Caco-2 (cell line): ENCODE measurements at regions of chr2 and their contacts with region 1.

Region 1: GRCh38 chr2:186256540-186256939 is 229.5 kb upstream of the ZC3H15 start:
- DNase-seq: peak in 1 of 2 experiments; percentile 33
- H3K4me3 ChIP-seq: no peak overlapping the region
- H3K4me3 Mint-ChIP-seq: no peak overlapping the region
- H3K27ac Mint-ChIP-seq: no peak overlapping the region
- H3K4me1 ChIP-seq: no peaks in the 10 kb centered on the region
- H3K4me1 Mint-ChIP-seq: no peaks in the 10 kb centered on the region
- H3K27me3 ChIP-seq: no peaks in the 10 kb centered on the region
- H3K27me3 Mint-ChIP-seq: no peaks in the 10 kb centered on the region
- CTCF ChIP-seq: peak; percentile 50 to 54

Region 2: DNA sequence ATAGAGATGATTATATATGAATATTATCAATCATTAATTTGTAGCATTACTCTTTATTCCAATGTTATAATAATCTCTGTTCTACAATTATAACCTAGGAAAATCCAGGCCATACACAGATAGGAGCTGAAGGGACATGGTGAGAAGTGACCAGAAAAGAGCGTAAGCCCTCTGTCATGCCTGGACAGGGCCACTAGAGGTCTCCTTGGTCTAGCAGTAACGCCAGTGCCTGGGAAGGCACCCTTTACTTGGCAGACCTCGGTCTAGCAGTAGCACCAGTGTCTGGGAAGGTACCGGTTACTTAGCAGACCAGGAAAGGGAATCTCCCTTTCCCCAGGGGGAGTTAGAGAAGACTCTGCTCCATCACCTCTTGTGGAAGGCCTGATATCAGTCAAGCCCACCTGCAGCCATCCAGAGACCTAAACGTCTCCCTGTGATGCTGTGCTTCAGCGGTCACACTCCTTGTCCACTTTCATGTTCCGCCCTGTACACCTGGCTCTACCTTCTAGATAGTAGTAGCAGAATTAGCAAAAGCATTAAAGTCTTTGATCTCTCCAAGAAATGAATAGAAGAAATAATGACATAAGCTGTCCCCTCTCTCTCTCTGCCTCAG is 965.4 kb before region 1 on chr2:
- CTCF ChIA-PET with region 1: no interaction called
- POLR2A ChIA-PET with region 1: no interaction called
- intact Hi-C with region 1: loop called (anchors 1 kb)
- DNase-seq: peak; percentile 72 to 79
- H3K4me3 ChIP-seq: no peak overlapping the region
- H3K4me3 Mint-ChIP-seq: no peak overlapping the region
- H3K27ac Mint-ChIP-seq: no peak overlapping the region
- H3K4me1 ChIP-seq: no peaks in the 10 kb centered on the region; the same call in 1 of the 2 replicates
- H3K4me1 Mint-ChIP-seq: peaks cover 5% of the 10 kb centered on the region
- H3K27me3 ChIP-seq: no peaks in the 10 kb centered on the region
- H3K27me3 Mint-ChIP-seq: no peaks in the 10 kb centered on the region
- CTCF ChIP-seq: peak; percentile 71 to 83

Region 3: DNA sequence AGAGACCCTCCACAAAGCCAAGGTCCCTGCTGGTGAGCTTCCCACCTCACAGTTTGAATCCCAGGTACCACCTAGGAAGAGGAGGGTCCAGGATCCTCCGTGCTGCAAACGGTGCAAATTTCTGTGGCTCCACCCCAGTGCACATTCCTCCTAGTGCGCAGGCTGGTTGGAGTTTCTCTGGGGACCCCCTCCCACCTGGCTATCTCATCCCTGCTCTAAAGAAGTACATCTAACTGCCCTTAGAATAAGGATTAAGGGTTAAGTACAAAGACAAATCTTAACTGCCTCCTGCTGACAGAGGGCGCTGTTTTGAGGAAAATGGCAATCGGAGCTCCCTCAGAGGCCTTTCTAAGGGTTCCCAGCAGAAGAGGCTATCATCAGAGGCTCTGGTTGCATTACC is 627.6 kb before region 1 on chr2:
- CTCF ChIA-PET with region 1: no interaction called
- POLR2A ChIA-PET with region 1: no interaction called
- intact Hi-C with region 1: loop called (anchors 1 kb)
- DNase-seq: peak; percentile 32 to 45
- H3K4me3 ChIP-seq: no peak overlapping the region
- H3K4me3 Mint-ChIP-seq: no peak overlapping the region
- H3K27ac Mint-ChIP-seq: no peak overlapping the region
- H3K4me1 ChIP-seq: no peaks in the 10 kb centered on the region
- H3K4me1 Mint-ChIP-seq: no peaks in the 10 kb centered on the region
- H3K27me3 ChIP-seq: no peaks in the 10 kb centered on the region; the same call in 1 of the 2 replicates
- H3K27me3 Mint-ChIP-seq: no peaks in the 10 kb centered on the region
- CTCF ChIP-seq: peak in 1 of 2 experiments; percentile 24

Region 4: GRCh38 chr2:185875136-185875931 is 381.2 kb before region 1 on chr2:
- CTCF ChIA-PET with region 1: no interaction called
- POLR2A ChIA-PET with region 1: no interaction called
- intact Hi-C with region 1: loop called (anchors 10 kb)
- DNase-seq: no peak
- H3K4me3 ChIP-seq: no peak overlapping the region
- H3K4me3 Mint-ChIP-seq: no peak overlapping the region
- H3K27ac Mint-ChIP-seq: no peak overlapping the region
- H3K4me1 ChIP-seq: no peaks in the 10 kb centered on the region
- H3K4me1 Mint-ChIP-seq: no peaks in the 10 kb centered on the region
- H3K27me3 ChIP-seq: no peaks in the 10 kb centered on the region
- H3K27me3 Mint-ChIP-seq: no peaks in the 10 kb centered on the region
- CTCF ChIP-seq: no peak

Region 5: GRCh38 chr2:185979546-185980071 is 276.9 kb before region 1 on chr2:
- CTCF ChIA-PET with region 1: no interaction called
- POLR2A ChIA-PET with region 1: no interaction called
- intact Hi-C with region 1: loop called (anchors 1 kb)
- DNase-seq: peak in 1 of 2 experiments; percentile 45
- H3K4me3 ChIP-seq: no peak overlapping the region
- H3K4me3 Mint-ChIP-seq: no peak overlapping the region
- H3K27ac Mint-ChIP-seq: no peak overlapping the region
- H3K4me1 ChIP-seq: 0 out of 2 replicates have a peak, but pooled peaks cover 4% of the 10 kb centered on the region
- H3K4me1 Mint-ChIP-seq: peaks cover 7% of the 10 kb centered on the region
- H3K27me3 ChIP-seq: no peaks in the 10 kb centered on the region
- H3K27me3 Mint-ChIP-seq: no peaks in the 10 kb centered on the region
- CTCF ChIP-seq: no peak

Region 6: DNA sequence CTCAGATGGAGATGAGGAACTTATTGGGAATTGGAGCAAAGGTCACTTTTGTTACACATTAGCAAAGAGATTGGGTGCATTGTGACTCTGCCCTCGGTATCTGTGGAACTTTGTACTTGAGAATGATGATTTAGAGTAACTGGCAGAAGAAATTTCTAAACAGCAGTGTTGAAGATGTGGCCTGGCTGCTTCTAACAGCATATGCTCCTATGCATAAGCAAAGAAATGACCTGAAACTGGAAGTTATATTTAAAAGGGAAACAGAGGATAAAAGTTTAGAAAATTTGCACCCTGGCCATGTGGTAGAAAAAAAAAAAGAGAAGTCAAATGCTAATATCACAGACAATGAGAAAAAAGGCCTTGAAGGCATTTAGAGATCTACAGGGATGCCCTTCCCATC is 27.3 kb before region 1 on chr2:
- CTCF ChIA-PET with region 1: no interaction called
- POLR2A ChIA-PET with region 1: no interaction called
- intact Hi-C with region 1: no loop called
- DNase-seq: no peak
- H3K4me3 ChIP-seq: no peak overlapping the region
- H3K4me3 Mint-ChIP-seq: no peak overlapping the region
- H3K27ac Mint-ChIP-seq: no peak overlapping the region
- H3K4me1 ChIP-seq: no peaks in the 10 kb centered on the region
- H3K4me1 Mint-ChIP-seq: no peaks in the 10 kb centered on the region
- H3K27me3 ChIP-seq: no peaks in the 10 kb centered on the region
- H3K27me3 Mint-ChIP-seq: no peaks in the 10 kb centered on the region
- CTCF ChIP-seq: no peak